Activated CD4-positive, alpha-beta T cell treated with anti-CD3 and anti-CD28 coated beads for 36 hours (primary cell): ENCODE measurements at regions of chrX and their contacts with region 1.

Region 1: DNA sequence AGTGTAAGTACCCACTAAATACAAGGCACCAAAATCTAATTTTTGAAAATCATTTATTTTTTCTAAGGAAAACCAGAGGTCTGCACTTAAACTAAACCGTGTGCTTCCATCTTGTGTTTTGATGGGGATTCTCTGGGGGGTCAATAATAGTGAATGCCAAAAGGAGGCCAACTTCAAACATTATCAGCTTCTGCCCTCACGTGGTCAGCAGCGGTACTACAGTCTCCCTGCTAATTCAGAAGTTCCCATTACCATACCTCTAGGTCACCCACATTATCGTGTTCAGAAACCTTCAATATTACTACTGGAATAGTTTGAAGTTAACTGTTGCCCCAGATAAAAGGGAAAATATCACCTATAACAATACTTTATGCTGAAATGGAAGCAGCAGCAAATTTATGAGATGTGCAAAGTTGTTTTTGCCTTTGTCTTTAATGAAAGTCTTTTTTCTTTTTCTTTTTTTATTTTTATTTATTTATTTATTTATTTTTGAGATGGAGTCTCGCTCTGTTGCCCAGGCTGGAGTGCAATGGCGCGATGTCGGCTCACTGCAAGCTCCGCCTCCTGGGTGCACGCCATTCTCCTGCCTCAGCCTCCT is 17.3 kb downstream of the CTPS2 start:
- DNase-seq: peak; percentile 72
- ATAC-seq: peak; percentile 39
- H3K4me3 Mint-ChIP-seq: no peak overlapping the region
- H3K27ac Mint-ChIP-seq: no peak overlapping the region
- H3K4me1 Mint-ChIP-seq: no peaks in the 10 kb centered on the region
- H3K27me3 Mint-ChIP-seq: no peaks in the 10 kb centered on the region

Region 2: DNA sequence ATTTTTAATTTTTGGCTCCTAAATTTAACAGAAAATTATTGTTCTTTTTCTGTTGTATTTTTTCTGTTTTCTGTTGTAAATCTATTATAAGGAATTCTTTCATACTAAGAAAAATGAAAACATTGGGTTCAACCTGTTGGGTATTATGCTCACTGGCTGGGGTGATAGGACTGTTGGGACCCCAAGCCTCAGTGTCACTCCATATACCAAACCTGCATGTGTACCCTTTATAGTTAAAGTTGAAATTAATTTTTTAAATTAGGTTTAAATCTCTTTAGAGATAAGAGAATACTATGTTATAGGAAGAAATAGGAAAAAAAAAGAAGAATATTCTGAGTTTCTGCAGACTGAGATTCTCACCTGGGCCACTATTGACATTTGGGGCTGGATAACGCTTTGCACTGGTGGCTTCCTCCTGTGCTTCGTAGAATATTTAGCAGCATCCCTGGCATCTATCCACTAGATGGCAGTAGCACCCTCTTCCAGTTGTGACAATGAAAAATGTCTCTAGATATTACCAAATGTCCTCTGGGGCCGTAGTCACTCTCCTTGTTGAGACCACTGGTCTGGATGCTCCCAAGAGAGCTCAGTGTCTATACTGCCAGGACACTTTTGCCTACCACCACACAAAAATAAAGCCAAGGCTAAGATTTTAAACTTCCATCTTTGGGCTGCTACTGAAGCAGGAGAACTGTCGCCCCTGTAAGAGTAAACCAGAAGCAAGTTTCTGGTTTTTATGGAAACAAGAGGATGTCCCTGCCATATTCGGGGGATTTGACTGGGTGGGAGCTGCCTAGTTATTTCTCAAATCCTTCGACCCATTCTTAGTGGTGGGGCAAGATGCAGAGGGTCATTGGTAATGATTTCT is 1008.1 kb before region 1 on chrX:
- CTCF ChIA-PET with region 1: no interaction called
- POLR2A ChIA-PET with region 1: no interaction called
- intact Hi-C with region 1: loop called in 1 of 2 experiments (anchors 10 kb)
- DNase-seq: peak; percentile 66
- ATAC-seq: peak; percentile 79
- H3K4me3 Mint-ChIP-seq: no peak overlapping the region
- H3K27ac Mint-ChIP-seq: no peak overlapping the region
- H3K4me1 Mint-ChIP-seq: peaks cover 12% of the 10 kb centered on the region
- H3K27me3 Mint-ChIP-seq: no peaks in the 10 kb centered on the region